ENCODE measurements at regions of chr5 and their contacts with region 1.

Region 1: DNA sequence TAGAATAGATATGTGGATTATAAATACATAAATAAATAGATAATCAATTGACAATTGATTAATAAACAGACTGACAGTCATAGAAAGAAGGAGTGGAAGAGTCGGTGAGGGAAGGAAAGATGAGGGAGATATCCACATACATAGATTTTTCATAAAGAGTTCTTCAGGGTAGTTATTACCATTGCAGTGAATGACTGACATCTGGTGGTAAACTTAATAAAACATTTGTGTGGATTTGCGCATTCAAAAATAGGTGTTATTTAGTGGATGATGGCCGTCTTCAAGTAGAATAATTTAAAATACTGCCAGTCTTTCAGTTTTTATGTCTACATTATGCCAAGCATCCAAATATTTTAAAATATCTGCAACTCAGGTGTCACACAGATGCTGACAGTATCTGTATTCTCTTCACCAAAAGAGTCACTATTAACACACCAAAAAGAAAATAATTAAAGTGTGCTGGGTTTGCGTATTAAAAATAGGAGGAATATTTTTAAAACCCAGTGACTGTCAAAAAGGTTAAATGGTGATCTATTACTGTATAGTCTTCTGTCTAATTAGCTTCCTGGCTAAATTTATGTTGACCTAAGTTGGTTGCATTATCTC is 78.8 kb downstream of the GIN1 start:
- DNase-seq: peak; percentile 37
- H3K4me3 ChIP-seq: no peak overlapping the region
- H3K27ac ChIP-seq: no peak overlapping the region
- H3K4me1 ChIP-seq: no peaks in the 10 kb centered on the region
- H3K27me3 ChIP-seq: peaks cover 2% of the 10 kb centered on the region
- CTCF ChIP-seq: peak; percentile 28 to 56

Region 2: GRCh38 chr5:102536323-102536928 is 504.7 kb before region 1 on chr5:
- CTCF ChIA-PET with region 1: no interaction called
- dilution Hi-C with region 1: no loop called
- in situ Hi-C with region 1: no loop called
- intact Hi-C with region 1: loop called (anchors 1 kb)
- DNase-seq: no peak
- H3K4me3 ChIP-seq: no peak overlapping the region
- H3K27ac ChIP-seq: no peak overlapping the region
- H3K4me1 ChIP-seq: no peaks in the 10 kb centered on the region
- H3K27me3 ChIP-seq: peaks cover 3% of the 10 kb centered on the region
- CTCF ChIP-seq: peak; percentile 29 to 43

Region 3: GRCh38 chr5:103224118-103224893 is 183.1 kb after region 1 on chr5:
- CTCF ChIA-PET with region 1: no interaction called
- dilution Hi-C with region 1: no loop called
- in situ Hi-C with region 1: no loop called
- intact Hi-C with region 1: loop called (anchors 5 kb)
- DNase-seq: peak; percentile 55
- H3K4me3 ChIP-seq: no peak overlapping the region
- H3K27ac ChIP-seq: no peak overlapping the region
- H3K4me1 ChIP-seq: no peaks in the 10 kb centered on the region
- H3K27me3 ChIP-seq: no peaks in the 10 kb centered on the region
- CTCF ChIP-seq: peak; percentile 66 to 72

Measured in mammary epithelial cell (primary cell).